IMR-90 (cell line): ENCODE measurements at regions of chr6 and their contacts with region 1.

Region 1: GRCh38 chr6:32413427-32414047 is 6.6 kb upstream of the BTNL2 start:
- DNase-seq: peak; percentile 69
- ATAC-seq: peak; percentile 93
- H3K4me3 ChIP-seq: no peak overlapping the region
- H3K27ac ChIP-seq: no peak overlapping the region
- H3K4me1 ChIP-seq: no peaks in the 10 kb centered on the region
- H3K27me3 ChIP-seq: peaks cover 24% of the 10 kb centered on the region
- CTCF ChIP-seq: peak; percentile 83
- POLR2A ChIP-seq: no peak
- RAD21 ChIP-seq: peak; percentile 72

Region 2: GRCh38 chr6:31971993-31972708 is 441.4 kb before region 1 on chr6 and contains the start of gene DXO:
- CTCF ChIA-PET with region 1: no interaction called
- POLR2A ChIA-PET with region 1: no interaction called
- dilution Hi-C with region 1: no loop called
- in situ Hi-C with region 1: no loop called
- intact Hi-C with region 1: no loop called
- DNase-seq: peak; percentile 99
- ATAC-seq: peak; percentile 91
- H3K4me3 ChIP-seq: peak within 1 kb of the TSS; percentile 60
- H3K27ac ChIP-seq: peak within 1 kb of the TSS; percentile 93
- H3K4me1 ChIP-seq: peaks cover 11% of the 10 kb centered on the region
- H3K27me3 ChIP-seq: no peaks in the 10 kb centered on the region
- CTCF ChIP-seq: no peak
- POLR2A ChIP-seq: peak; percentile 71
- RAD21 ChIP-seq: 0 out of 2 replicates have a peak, but pooled peaks have one; percentile 1
- total RNA-seq, gene DXO: 7.8 and 9.3 TPM in 2 replicates

Region 3: DNA sequence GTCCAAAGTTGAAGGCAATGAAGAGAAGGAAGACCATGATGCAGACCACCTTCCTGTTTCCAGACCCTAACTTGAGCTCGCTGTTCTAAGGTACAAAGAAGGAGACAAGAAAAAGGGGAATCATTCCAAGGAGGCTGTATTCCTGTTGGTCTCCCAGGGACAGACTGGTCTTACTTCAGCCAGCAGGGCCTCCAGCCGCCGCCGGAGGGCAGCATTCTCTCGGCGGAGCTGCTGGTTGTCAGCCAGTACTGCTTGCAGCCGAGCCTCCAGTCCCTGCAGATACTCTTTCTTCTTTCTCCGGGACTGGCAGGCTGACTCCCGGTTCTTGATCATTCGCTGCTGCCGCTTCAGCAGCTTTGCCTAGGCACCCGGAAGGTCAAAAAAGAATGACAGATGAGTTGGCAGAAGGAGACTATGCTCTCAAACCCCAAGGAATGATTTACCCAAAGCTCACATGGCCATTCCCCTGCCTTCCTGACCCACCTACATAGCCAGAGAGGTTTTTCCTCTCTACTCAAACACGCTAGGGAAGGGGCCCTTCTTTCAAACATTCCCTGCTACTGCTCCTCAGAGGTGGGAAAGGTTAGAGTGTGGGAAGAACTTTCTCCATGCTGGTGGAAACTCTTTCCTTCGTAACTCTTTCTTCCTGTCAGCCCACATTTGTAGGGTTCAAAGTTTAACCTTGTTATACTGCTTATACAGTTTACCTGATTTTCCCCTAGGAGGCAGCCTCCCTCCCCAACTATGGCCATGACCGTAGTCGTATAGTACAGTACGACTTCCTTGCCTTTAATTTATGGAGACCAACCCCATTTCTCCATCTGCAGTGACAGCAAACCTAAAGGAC is 294.5 kb before region 1 on chr6:
- CTCF ChIA-PET with region 1: no interaction called
- POLR2A ChIA-PET with region 1: no interaction called
- dilution Hi-C with region 1: no loop called
- in situ Hi-C with region 1: no loop called
- intact Hi-C with region 1: loop called (anchors 5 kb)
- DNase-seq: peak; percentile 85
- ATAC-seq: peak; percentile 78
- H3K4me3 ChIP-seq: no peak overlapping the region
- H3K27ac ChIP-seq: peak overlapping the region; percentile 36; the same call in 1 of the 2 replicates
- H3K4me1 ChIP-seq: peaks cover 11% of the 10 kb centered on the region
- H3K27me3 ChIP-seq: no peaks in the 10 kb centered on the region
- CTCF ChIP-seq: peak; percentile 98
- POLR2A ChIP-seq: peak; percentile 57; the same call in 1 of the 2 replicates
- RAD21 ChIP-seq: peak; percentile 98

Region 4: GRCh38 chr6:32692019-32692418 is 278.5 kb after region 1 on chr6:
- CTCF ChIA-PET with region 1: no interaction called
- POLR2A ChIA-PET with region 1: no interaction called
- dilution Hi-C with region 1: no loop called
- in situ Hi-C with region 1: loop called (anchors 10 kb)
- intact Hi-C with region 1: no loop called
- DNase-seq: no peak
- ATAC-seq: no peak
- H3K4me3 ChIP-seq: no peak overlapping the region
- H3K27ac ChIP-seq: no peak overlapping the region
- H3K4me1 ChIP-seq: no peaks in the 10 kb centered on the region
- H3K27me3 ChIP-seq: no peaks in the 10 kb centered on the region
- CTCF ChIP-seq: no peak
- POLR2A ChIP-seq: no peak
- RAD21 ChIP-seq: no peak

Region 5: GRCh38 chr6:32700391-32701040 is 287.0 kb after region 1 on chr6:
- CTCF ChIA-PET with region 1: interaction called, 4 read pairs
- POLR2A ChIA-PET with region 1: no interaction called
- dilution Hi-C with region 1: no loop called
- in situ Hi-C with region 1: loop called (anchors 10 kb)
- intact Hi-C with region 1: loop called (anchors 1 kb)
- DNase-seq: peak; percentile 59
- ATAC-seq: peak; percentile 93
- H3K4me3 ChIP-seq: no peak overlapping the region
- H3K27ac ChIP-seq: no peak overlapping the region
- H3K4me1 ChIP-seq: no peaks in the 10 kb centered on the region
- H3K27me3 ChIP-seq: peaks cover 2% of the 10 kb centered on the region
- CTCF ChIP-seq: peak; percentile 55
- POLR2A ChIP-seq: no peak
- RAD21 ChIP-seq: peak; percentile 54

Region 6: DNA sequence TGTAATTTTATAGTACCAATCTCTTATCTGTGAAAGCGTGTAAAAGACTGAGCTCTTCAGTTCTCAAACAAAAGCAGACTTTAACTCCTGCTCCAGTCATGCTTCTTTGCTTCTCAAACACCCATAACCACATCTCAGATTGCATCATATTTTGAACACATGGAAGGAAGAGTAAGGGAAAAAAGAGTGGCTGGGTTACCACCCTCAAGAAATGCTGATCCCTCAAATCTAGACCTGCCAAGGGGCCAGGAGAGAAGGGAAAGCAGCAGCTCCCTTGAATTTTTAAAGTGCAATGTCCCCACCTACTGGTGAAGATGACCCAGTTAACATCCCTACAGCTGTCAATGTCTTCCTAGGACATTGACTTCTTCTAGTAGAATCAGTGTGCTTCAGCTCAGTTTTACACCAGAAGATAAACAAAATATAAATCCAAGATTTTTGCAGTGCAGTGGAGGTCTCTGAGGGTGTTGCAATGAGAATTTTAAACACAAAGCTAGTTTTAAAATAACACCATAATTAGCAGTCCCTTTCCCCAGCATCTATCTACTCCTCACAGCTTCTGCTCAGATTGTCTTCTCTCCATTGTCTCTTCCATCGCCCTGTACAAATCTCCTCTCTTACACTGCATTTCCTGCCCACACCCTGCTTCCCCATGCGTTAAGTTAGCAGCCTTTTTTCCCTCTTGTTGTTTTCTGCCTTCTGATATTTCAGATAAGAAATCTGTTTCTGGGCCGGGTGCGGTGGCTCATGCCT is 372.4 kb after region 1 on chr6:
- CTCF ChIA-PET with region 1: interaction called, 7 read pairs
- POLR2A ChIA-PET with region 1: no interaction called
- dilution Hi-C with region 1: no loop called
- in situ Hi-C with region 1: no loop called
- intact Hi-C with region 1: loop called (anchors 2 kb)
- DNase-seq: peak; percentile 49
- ATAC-seq: peak; percentile 81
- H3K4me3 ChIP-seq: no peak overlapping the region
- H3K27ac ChIP-seq: no peak overlapping the region
- H3K4me1 ChIP-seq: no peaks in the 10 kb centered on the region
- H3K27me3 ChIP-seq: peaks cover 4% of the 10 kb centered on the region
- CTCF ChIP-seq: peak; percentile 53
- POLR2A ChIP-seq: no peak
- RAD21 ChIP-seq: peak; percentile 44

Region 7: DNA sequence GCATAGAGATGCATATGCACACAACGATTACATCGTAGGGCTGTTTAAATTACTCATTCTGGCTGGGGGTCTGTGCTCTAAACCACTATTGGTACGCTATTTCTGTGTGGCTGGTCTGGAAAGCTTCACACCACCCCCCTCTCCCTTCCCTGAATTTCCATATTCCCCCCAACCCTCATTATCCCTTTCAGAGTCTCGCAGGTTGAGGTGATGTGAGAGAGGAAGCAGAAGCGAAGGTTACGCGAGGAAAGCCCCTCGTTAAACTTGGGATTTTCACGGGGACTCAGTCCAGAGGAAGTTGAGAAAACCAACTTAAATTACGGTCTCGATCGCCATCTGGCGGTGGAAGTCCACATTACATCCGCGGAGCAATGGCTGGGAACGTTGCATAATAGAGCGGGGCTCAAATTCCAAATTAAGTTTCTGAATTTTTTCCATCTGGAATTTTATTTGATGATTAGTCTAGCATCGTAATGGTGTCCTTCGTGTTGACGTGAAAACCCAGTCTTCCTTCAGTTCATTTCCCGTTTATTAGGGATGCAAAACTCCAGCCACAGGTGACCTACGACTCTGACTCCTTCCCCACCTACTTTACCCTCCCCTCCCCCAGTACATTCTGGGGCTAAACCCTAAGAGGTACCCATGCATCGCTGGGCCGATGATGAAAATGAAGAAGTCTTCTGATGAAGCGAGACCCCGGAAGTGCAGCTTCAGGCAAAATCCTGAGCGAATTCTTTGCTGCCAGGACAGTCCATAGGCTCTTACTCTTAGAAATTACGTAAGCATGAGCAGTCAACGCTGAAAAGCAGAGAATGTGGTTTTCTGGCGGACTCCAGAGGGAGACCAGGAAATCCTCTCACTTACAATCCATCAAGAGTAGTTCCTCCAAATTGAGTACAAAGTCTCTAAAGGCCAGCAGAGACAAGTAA is 383.6 kb after region 1 on chr6:
- CTCF ChIA-PET with region 1: interaction called, 4 read pairs
- POLR2A ChIA-PET with region 1: no interaction called
- dilution Hi-C with region 1: no loop called
- in situ Hi-C with region 1: loop called (anchors 5 kb)
- intact Hi-C with region 1: loop called (anchors 1 kb)
- DNase-seq: peak; percentile 58
- ATAC-seq: peak; percentile 95
- H3K4me3 ChIP-seq: peak overlapping the region; percentile 10
- H3K27ac ChIP-seq: no peak overlapping the region
- H3K4me1 ChIP-seq: no peaks in the 10 kb centered on the region
- H3K27me3 ChIP-seq: peaks cover 20% of the 10 kb centered on the region
- CTCF ChIP-seq: peak; percentile 86
- POLR2A ChIP-seq: no peak
- RAD21 ChIP-seq: peak; percentile 66

Region 8: DNA sequence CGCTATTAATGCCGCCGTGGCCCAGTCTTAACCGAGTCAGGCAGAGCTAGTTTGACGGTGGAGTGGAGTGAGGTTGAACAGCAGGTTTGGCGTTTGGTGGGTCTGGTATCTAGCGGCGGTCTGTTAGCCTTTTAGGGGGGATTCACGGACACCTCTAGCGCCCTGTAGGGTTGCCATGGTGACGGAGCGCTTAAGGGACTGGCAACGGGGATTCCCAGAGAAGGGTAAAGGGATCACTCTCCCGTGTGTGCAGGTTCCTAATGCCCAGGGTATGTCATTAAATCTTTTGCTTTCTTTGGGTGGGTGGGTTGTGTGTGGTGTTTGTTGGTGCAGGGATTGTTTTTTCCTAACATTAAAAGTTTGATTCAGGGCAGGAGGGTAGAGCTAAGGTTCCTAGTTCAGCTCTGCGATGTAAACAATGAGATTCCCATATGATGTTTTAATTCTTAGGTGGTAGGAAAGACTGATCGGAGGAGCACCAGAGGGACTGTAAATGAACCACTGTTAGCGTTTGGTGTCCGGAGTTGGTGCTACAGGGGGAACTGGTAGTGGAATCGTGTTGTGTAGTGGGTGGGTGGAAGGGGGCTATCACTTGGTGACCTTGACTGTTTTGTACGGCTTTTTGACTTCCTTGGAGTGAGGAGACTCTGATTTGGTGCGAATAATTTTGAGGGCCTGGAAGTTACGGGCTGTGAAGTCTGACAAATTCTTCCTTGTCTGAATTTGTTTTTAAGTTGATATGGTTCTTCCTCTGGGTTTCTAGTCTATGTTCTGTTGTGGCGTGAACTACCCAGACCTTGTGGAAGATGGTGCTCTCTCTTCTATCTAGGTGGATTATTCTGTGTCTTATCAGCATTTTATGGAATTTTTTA is 559.8 kb after region 1 on chr6:
- CTCF ChIA-PET with region 1: no interaction called
- POLR2A ChIA-PET with region 1: no interaction called
- dilution Hi-C with region 1: no loop called
- in situ Hi-C with region 1: no loop called
- intact Hi-C with region 1: no loop called
- DNase-seq: peak; percentile 40
- ATAC-seq: no peak
- H3K4me3 ChIP-seq: peak overlapping the region; percentile 92
- H3K27ac ChIP-seq: peak overlapping the region; percentile 70
- H3K4me1 ChIP-seq: peaks cover 8% of the 10 kb centered on the region
- H3K27me3 ChIP-seq: no peaks in the 10 kb centered on the region
- CTCF ChIP-seq: no peak
- POLR2A ChIP-seq: no peak
- RAD21 ChIP-seq: no peak